CD4-positive, alpha-beta memory T cell (primary cell): ENCODE measurements at regions of chr19 and their contacts with region 1.

Region 1: GRCh38 chr19:49877020-49877878 is at the starts of genes AKT1S1 and TBC1D17:
- DNase-seq: peak; percentile 99 to 100 (median 100)
- H3K4me3 ChIP-seq: peak within 1 kb of the TSS; percentile 97 to 98
- H3K4me3 Mint-ChIP-seq: no peak within 1 kb of the TSS
- H3K27ac ChIP-seq: peak within 1 kb of the TSS; percentile 95
- H3K27ac Mint-ChIP-seq: no peak within 1 kb of the TSS
- H3K4me1 ChIP-seq: peaks cover 29% of the 10 kb centered on the region
- H3K4me1 Mint-ChIP-seq: peaks cover 14 to 44% (median 18%) of the 10 kb centered on the region in 4 donors
- H3K27me3 ChIP-seq: no peaks in the 10 kb centered on the region
- H3K27me3 Mint-ChIP-seq: no peaks in the 10 kb centered on the region
- total RNA-seq, gene AKT1S1: 19.7 to 20.2 TPM
- total RNA-seq, gene TBC1D17: 101 TPM

Region 2: GRCh38 chr19:49272184-49272583 is 605.1 kb before region 1 on chr19:
- CTCF ChIA-PET with region 1: no interaction called
- POLR2A ChIA-PET with region 1: no interaction called
- intact Hi-C with region 1: no loop called
- DNase-seq: no peak
- H3K4me3 ChIP-seq: no peak overlapping the region
- H3K4me3 Mint-ChIP-seq: no peak overlapping the region
- H3K27ac ChIP-seq: no peak overlapping the region
- H3K27ac Mint-ChIP-seq: no peak overlapping the region
- H3K4me1 ChIP-seq: no peaks in the 10 kb centered on the region
- H3K4me1 Mint-ChIP-seq: no peaks in the 10 kb centered on the region
- H3K27me3 ChIP-seq: no peaks in the 10 kb centered on the region
- H3K27me3 Mint-ChIP-seq: peaks cover 3 to 11% of the 10 kb centered on the region in 2 donors

Region 3: GRCh38 chr19:49497047-49497788 is 380.0 kb before region 1 on chr19:
- CTCF ChIA-PET with region 1: no interaction called
- POLR2A ChIA-PET with region 1: interaction called, 5 read pairs
- intact Hi-C with region 1: loop called (anchors 2 kb)
- DNase-seq: peak; percentile 79 to 89 (median 83)
- H3K4me3 ChIP-seq: peak overlapping the region; percentile 92 to 99
- H3K4me3 Mint-ChIP-seq: peak overlapping the region; percentile 99 to 100 (median 100)
- H3K27ac ChIP-seq: peak overlapping the region; percentile 95
- H3K27ac Mint-ChIP-seq: peak overlapping the region; percentile 95 to 100 (median 99)
- H3K4me1 ChIP-seq: peaks cover 55% of the 10 kb centered on the region
- H3K4me1 Mint-ChIP-seq: peaks cover 23 to 87% (median 43%) of the 10 kb centered on the region in 4 donors
- H3K27me3 ChIP-seq: no peaks in the 10 kb centered on the region
- H3K27me3 Mint-ChIP-seq: no peaks in the 10 kb centered on the region

Region 4: DNA sequence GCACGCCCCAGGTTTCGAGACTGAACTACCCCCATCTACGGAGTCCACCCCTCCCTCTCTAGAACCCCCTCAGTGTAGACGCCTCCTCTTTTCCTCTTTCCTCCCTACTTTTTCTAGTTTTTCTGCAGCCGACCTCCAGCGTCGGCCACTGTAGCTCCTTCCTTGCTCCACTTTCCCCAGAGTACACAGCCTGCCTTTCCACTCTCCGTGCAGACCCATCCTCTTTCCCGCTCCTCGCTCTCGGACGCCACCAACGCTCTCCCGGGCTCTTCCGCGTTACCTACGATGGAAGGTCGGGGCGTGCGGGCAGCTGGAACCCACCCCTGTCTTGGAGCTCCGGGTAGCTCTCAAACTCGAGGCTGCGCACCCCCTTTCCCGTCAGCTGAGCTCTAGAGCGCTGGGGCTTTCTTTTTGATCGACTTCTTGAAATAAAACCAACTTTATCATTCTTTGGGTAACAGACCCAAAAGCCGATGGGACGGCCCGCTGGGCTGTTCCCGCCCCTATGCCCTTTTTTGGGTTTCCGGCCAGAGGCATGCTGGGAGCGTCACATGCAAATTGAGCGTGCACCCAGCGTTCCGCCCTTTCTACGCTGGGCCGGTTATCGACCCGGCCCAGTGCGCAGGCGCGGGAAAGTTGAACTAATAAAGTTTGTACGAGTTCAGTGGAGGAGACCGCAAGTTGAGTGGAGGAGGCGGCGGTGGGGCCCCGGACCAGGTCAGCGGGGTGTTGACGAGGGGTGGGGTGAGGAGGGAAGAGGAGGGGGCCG is 211.7 kb before region 1 on chr19 and contains the starts of genes BCL2L12 and IRF3:
- CTCF ChIA-PET with region 1: no interaction called
- POLR2A ChIA-PET with region 1: interaction called, 12 read pairs
- intact Hi-C with region 1: no loop called
- DNase-seq: peak; percentile 99
- H3K4me3 ChIP-seq: peak within 1 kb of the TSS; percentile 99
- H3K4me3 Mint-ChIP-seq: peak within 1 kb of the TSS; percentile 95 to 100 (median 97)
- H3K27ac ChIP-seq: peak within 1 kb of the TSS; percentile 93
- H3K27ac Mint-ChIP-seq: peak within 1 kb of the TSS; percentile 95 to 100 (median 99)
- H3K4me1 ChIP-seq: peaks cover 31% of the 10 kb centered on the region
- H3K4me1 Mint-ChIP-seq: peaks cover 19 to 56% (median 31%) of the 10 kb centered on the region in 4 donors
- H3K27me3 ChIP-seq: no peaks in the 10 kb centered on the region
- H3K27me3 Mint-ChIP-seq: no peaks in the 10 kb centered on the region
- total RNA-seq, gene BCL2L12: 21.9 to 22.1 TPM
- total RNA-seq, gene IRF3: 366 to 386 TPM

Region 5: GRCh38 chr19:49808711-49809159 is 68.5 kb before region 1 on chr19:
- CTCF ChIA-PET with region 1: no interaction called
- POLR2A ChIA-PET with region 1: interaction called, 37 read pairs
- intact Hi-C with region 1: loop called (anchors 1 kb)
- DNase-seq: peak; percentile 79 to 94 (median 85)
- H3K4me3 ChIP-seq: peak overlapping the region; percentile 36 to 68
- H3K4me3 Mint-ChIP-seq: peak overlapping the region; percentile 86 to 98 (median 90)
- H3K27ac ChIP-seq: peak overlapping the region; percentile 71
- H3K27ac Mint-ChIP-seq: peak overlapping the region; percentile 91 to 97 (median 94)
- H3K4me1 ChIP-seq: peaks cover 27% of the 10 kb centered on the region
- H3K4me1 Mint-ChIP-seq: peaks cover 15 to 39% (median 27%) of the 10 kb centered on the region in 4 donors
- H3K27me3 ChIP-seq: no peaks in the 10 kb centered on the region
- H3K27me3 Mint-ChIP-seq: no peaks in the 10 kb centered on the region

Region 6: DNA sequence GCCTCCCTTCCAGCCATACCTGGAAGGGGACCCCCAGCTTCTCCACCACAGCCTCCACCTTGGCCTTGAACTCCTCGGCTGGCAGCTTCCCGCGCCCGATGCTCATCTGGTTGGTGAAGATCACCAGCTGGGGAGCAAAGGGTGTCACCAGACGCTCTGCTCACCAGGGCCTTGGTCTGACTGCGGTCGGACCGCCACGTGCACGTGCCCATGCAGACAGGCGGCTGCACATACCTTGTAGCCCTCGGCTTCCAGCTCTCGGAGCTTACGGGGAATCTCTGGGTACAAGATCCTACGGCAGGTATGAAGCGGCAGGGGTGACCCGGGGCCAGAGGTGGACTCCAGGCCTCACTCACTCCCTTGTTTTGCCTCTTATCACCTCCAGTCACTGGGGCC is 13.3 kb before region 1 on chr19:
- CTCF ChIA-PET with region 1: interaction called, 4 read pairs
- POLR2A ChIA-PET with region 1: interaction called, 73 read pairs
- intact Hi-C with region 1: loop called (anchors 1 kb)
- DNase-seq: peak in 1 of 5 donors; percentile 0
- H3K4me3 ChIP-seq: no peak overlapping the region
- H3K4me3 Mint-ChIP-seq: peak overlapping the region in 2 of 8 donors; percentile 7 to 21
- H3K27ac ChIP-seq: no peak overlapping the region
- H3K27ac Mint-ChIP-seq: peak overlapping the region in 1 of 7 donors; percentile 48
- H3K4me1 ChIP-seq: peaks cover 35% of the 10 kb centered on the region
- H3K4me1 Mint-ChIP-seq: peaks cover 4 to 39% (median 21%) of the 10 kb centered on the region in 4 donors
- H3K27me3 ChIP-seq: no peaks in the 10 kb centered on the region
- H3K27me3 Mint-ChIP-seq: no peaks in the 10 kb centered on the region

Region 7: DNA sequence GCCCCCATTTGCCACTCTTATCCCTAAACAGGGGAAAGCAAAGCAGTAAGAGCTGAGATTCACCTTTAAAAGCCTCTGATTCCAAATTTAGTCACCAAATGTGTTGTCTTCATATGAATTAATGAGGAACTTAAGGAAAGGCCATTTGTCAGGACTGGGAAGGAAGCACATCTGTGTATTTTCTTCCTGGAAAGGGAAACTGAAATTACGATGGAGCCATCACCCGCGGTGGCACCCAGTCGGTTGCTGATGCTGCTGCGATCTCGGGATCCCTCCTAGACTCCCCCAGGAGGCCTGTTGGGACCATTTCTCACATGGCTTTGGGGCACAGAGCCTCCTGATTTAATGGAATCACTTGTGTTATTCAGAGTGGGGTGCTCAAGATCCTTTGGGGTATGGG is 26.9 kb after region 1 on chr19:
- CTCF ChIA-PET with region 1: no interaction called
- POLR2A ChIA-PET with region 1: no interaction called
- intact Hi-C with region 1: no loop called
- DNase-seq: no peak
- H3K4me3 ChIP-seq: no peak overlapping the region
- H3K4me3 Mint-ChIP-seq: no peak overlapping the region
- H3K27ac ChIP-seq: no peak overlapping the region
- H3K27ac Mint-ChIP-seq: peak overlapping the region in 2 of 7 donors; percentile 12 to 30
- H3K4me1 ChIP-seq: no peaks in the 10 kb centered on the region
- H3K4me1 Mint-ChIP-seq: peaks cover 0 to 21% (median 10%) of the 10 kb centered on the region in 4 donors
- H3K27me3 ChIP-seq: no peaks in the 10 kb centered on the region
- H3K27me3 Mint-ChIP-seq: no peaks in the 10 kb centered on the region

Region 8: GRCh38 chr19:49929611-49930482 is 52.6 kb after region 1 on chr19:
- CTCF ChIA-PET with region 1: no interaction called
- POLR2A ChIA-PET with region 1: interaction called, 47 read pairs
- intact Hi-C with region 1: loop called (anchors 1 kb)
- DNase-seq: peak; percentile 94 to 97 (median 96)
- H3K4me3 ChIP-seq: peak overlapping the region; percentile 93 to 99
- H3K4me3 Mint-ChIP-seq: peak overlapping the region; percentile 97 to 99 (median 98)
- H3K27ac ChIP-seq: peak overlapping the region; percentile 96
- H3K27ac Mint-ChIP-seq: peak overlapping the region; percentile 96 to 99 (median 98)
- H3K4me1 ChIP-seq: peaks cover 57% of the 10 kb centered on the region
- H3K4me1 Mint-ChIP-seq: peaks cover 36 to 74% (median 57%) of the 10 kb centered on the region in 4 donors
- H3K27me3 ChIP-seq: no peaks in the 10 kb centered on the region
- H3K27me3 Mint-ChIP-seq: no peaks in the 10 kb centered on the region